ENCODE measurements at regions of chr12 and their contacts with region 1.

Region 1: GRCh38 chr12:91178139-91178561 is 4.5 kb downstream of the DCN start:
- DNase-seq: no peak
- H3K4me3 ChIP-seq: no peak overlapping the region
- H3K4me3 Mint-ChIP-seq: no peak overlapping the region
- H3K27ac Mint-ChIP-seq: no peak overlapping the region
- H3K4me1 ChIP-seq: no peaks in the 10 kb centered on the region
- H3K4me1 Mint-ChIP-seq: no peaks in the 10 kb centered on the region
- H3K27me3 ChIP-seq: no peaks in the 10 kb centered on the region
- H3K27me3 Mint-ChIP-seq: no peaks in the 10 kb centered on the region
- CTCF ChIP-seq: peak; percentile 22 to 33

Region 2: DNA sequence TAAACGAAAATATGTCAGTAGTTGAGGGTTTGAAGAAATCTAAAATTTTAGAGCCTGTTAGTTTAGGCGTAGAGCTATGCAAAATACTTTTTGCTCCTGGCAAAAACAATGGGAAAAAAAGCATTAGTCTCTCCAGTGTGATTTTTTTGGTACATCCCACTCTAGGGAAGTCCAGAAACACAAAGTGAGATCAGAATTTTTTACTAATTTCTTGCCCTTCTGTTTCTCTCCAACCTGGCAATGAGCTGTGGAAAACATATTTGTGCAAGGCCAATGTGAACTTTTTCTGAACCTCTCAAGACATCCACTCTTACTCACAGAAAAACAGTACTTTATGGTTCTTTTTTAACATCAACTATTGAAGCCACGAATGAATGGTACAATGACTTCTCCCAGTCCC is 61.3 kb after region 1 on chr12:
- CTCF ChIA-PET with region 1: interaction called, 3 read pairs
- POLR2A ChIA-PET with region 1: no interaction called
- intact Hi-C with region 1: loop called (anchors 5 kb)
- DNase-seq: no peak
- H3K4me3 ChIP-seq: no peak overlapping the region
- H3K4me3 Mint-ChIP-seq: no peak overlapping the region
- H3K27ac Mint-ChIP-seq: no peak overlapping the region
- H3K4me1 ChIP-seq: no peaks in the 10 kb centered on the region
- H3K4me1 Mint-ChIP-seq: no peaks in the 10 kb centered on the region
- H3K27me3 ChIP-seq: no peaks in the 10 kb centered on the region
- H3K27me3 Mint-ChIP-seq: peaks cover 6% of the 10 kb centered on the region
- CTCF ChIP-seq: no peak

Region 3: DNA sequence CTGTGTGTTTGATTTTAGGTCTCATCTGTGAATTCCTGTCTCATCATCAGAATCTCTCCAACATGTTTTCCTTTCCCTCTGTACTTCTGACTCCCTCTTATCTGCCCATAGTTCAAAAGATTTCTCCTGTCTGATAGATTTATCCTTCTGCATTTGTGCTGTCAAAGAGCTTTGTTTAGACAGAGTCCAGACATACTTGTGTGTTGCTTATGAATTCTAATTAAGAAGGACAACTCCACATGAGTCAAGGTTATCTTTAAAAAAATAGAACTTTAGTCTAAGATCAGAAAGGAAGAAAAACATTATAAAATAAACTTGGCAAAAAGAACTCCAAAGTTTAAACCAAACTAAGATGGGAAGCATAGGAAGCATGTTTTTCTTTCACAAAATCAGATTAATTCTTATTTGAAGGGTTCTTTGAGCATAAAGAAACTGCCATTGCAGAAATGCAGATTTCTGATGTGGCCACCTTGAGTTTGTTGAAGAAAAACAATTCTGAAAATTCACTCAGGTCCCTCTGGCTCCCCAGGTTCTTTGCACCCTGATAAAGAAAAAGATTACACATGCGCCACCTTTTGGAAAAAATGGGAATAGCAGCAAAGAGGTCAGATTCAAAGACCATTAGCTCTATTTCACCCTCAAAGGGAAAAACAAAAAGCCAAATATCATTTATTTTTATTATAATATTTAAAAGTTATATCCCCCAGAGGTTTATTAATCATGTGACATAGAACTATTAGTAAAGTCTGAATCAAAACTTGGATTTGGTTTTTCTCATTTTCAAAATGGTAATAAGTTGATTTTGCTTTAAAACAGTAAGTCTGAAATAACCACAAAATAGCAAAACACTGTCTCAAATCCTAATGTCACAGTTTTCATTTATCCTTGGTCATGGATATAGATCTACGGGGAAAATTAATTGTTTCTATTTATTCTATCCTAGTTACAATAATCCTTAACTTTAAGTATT is 148.2 kb after region 1 on chr12:
- CTCF ChIA-PET with region 1: interaction called, 6 read pairs
- POLR2A ChIA-PET with region 1: no interaction called
- intact Hi-C with region 1: loop called (anchors 1 kb)
- DNase-seq: peak; percentile 38 to 64
- H3K4me3 ChIP-seq: no peak overlapping the region
- H3K4me3 Mint-ChIP-seq: no peak overlapping the region
- H3K27ac Mint-ChIP-seq: no peak overlapping the region
- H3K4me1 ChIP-seq: no peaks in the 10 kb centered on the region
- H3K4me1 Mint-ChIP-seq: no peaks in the 10 kb centered on the region
- H3K27me3 ChIP-seq: no peaks in the 10 kb centered on the region
- H3K27me3 Mint-ChIP-seq: no peaks in the 10 kb centered on the region
- CTCF ChIP-seq: peak; percentile 62 to 65

Region 4: DNA sequence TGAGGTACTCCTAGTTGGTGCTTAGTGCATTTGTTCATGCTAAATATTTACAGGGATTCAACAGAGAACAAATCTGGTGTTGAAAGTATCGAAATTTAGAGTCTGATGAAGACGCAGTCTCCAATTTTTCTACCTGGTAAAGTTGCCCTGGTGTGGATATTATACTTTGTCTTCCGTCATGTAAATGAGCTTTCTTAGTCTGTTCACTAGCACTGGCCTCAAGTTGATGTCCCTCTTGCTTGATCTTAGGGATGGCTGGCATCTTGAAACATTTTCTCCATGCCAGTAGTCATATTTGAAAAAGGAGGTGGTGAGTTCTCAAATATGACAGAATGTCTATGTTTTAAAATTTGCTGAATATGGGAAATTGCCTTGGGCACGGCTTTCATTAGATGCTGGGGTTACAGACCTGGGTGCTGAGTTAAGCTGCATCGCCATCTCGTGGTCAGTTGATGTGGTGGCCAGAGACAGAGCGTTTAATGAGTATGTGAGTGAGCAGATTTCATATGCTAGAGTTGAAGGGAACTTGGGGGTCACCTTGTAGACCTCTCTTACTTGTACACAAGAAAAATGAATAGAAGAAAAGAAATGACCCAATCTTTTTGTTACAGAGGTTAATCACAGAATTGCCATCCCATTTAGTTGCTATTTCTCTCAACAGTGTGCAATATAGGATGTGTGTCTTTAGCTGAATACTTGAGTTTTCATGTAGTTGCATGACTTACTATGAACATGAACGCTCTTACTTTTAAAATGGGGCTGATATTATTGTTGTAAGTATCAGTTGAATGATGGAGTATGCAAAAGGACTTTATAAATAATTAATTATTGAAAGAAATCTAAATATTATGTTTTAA is 177.2 kb after region 1 on chr12:
- CTCF ChIA-PET with region 1: no interaction called
- POLR2A ChIA-PET with region 1: no interaction called
- intact Hi-C with region 1: loop called (anchors 1 kb)
- DNase-seq: peak; percentile 58 to 70
- H3K4me3 ChIP-seq: no peak overlapping the region
- H3K4me3 Mint-ChIP-seq: no peak overlapping the region
- H3K27ac Mint-ChIP-seq: no peak overlapping the region
- H3K4me1 ChIP-seq: peaks cover 16% of the 10 kb centered on the region
- H3K4me1 Mint-ChIP-seq: peaks cover 8% of the 10 kb centered on the region
- H3K27me3 ChIP-seq: no peaks in the 10 kb centered on the region
- H3K27me3 Mint-ChIP-seq: no peaks in the 10 kb centered on the region
- CTCF ChIP-seq: peak; percentile 66 to 83

Measured in Caco-2 (cell line).